Sciatic nerve (tissue), 2 donors: ENCODE measurements at regions of chr1 and their contacts with region 1.

Region 1: GRCh38 chr1:236904874-236905741 is 99.1 kb downstream of the MT1HL1 start:
- DNase-seq: no peak
- ATAC-seq: no peak

Region 2: DNA sequence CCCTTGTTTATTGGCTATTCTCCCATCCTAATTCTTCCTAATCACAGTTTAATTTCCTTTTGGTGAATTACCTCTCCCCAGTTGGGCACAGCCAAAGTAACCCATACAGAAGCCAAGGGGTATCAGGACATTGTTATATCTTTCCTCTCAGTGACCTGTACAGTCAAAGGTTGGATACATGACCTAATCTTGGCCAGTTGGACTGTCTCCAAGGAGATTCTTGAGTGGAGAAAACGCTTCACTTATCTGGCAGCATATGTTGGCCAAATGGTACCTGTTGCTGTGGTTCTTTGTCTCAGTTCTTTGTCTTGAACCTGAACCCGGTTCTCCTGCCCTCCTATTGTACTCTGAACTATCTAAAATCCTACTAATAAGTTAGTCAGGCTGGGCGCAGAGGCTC is 1553.2 kb before region 1 on chr1:
- intact Hi-C with region 1: loop called (anchors 5 kb)
- DNase-seq: no peak
- ATAC-seq: no peak

Region 3: DNA sequence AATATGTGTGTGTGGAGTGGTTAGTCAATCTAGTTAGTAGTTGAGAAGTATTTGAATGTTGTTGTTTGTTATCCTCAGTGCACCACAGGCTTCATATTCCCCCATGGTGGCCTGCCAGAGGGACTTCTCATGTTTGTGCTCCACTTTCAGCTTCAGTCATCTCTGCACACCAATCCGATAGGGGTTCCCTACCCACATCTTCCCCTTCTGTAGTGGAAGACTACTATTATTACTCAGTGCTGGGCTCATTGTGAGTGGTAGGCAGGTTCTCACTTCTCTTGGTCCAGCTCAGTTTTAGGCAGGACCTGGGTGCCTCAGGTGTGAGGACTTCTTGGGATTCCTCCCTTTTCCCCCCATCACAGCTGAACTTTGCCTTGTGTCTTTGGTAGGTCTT is 84.9 kb after region 1 on chr1:
- intact Hi-C with region 1: no loop called
- DNase-seq: no peak
- ATAC-seq: no peak